ENCODE measurements at regions of chr20 and their contacts with region 1.

Region 1: DNA sequence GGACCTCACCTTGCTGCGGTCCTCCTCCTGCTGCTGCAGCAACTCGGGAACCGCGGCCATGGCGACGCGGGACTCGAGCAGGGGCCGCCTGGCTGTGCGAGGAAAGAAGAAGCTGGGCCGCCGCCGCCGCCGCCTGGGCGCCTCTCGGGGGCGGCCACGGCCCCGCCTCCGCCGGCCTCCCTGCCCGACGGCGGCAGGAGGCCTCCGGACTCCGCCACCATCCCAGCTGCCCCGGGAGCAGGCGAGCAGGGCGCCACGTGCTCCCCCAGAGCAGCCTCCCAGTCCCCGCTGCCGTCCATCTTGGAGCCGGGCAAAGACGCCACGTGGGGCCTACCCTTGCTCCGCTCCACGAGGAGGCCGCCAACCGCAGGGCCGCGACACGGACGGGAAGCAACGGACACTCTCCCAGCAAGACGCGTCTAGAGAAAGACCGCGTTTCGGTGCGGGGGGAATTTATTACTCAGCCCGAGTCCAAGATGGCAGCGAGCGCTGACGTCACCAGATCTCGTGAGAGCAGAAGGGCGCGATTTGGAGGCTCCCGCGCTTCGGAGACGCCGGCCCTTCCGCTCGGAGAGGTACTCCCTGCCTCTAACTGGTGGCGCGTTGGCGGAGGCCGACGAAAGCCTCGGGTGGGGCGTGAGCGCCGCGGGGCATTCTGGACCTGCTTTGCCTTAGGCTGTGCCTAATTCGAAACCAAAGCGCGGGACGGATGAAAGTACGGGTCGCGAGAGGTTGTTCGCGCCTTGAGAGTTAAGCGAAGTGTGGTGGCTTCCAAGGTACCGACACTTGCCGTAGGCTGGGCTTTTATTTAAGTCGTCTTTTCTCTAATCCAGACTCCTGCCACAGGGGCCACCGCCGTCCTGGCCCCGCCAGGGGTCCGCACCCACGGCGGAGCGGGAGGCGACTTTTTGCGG is at the starts of genes MGME1 and SNX5:
- DNase-seq: peak; percentile 100
- H3K4me3 ChIP-seq: peak within 1 kb of the TSS; percentile 72
- H3K4me3 Mint-ChIP-seq: peak within 1 kb of the TSS; percentile 93
- H3K27ac Mint-ChIP-seq: peak within 1 kb of the TSS; percentile 99
- H3K4me1 ChIP-seq: peaks cover 51% of the 10 kb centered on the region
- H3K4me1 Mint-ChIP-seq: peaks cover 24% of the 10 kb centered on the region
- H3K27me3 ChIP-seq: no peaks in the 10 kb centered on the region
- H3K27me3 Mint-ChIP-seq: no peaks in the 10 kb centered on the region
- CTCF ChIP-seq: no peak
- total RNA-seq, gene MGME1: 44.3 and 50.5 TPM in 2 replicates
- total RNA-seq, gene SNX5: 275 and 299 TPM in 2 replicates

Region 2: GRCh38 chr20:17873410-17874270 is 95.0 kb before region 1 on chr20:
- CTCF ChIA-PET with region 1: no interaction called
- POLR2A ChIA-PET with region 1: no interaction called
- intact Hi-C with region 1: no loop called
- DNase-seq: no peak
- H3K4me3 ChIP-seq: no peak overlapping the region
- H3K4me3 Mint-ChIP-seq: no peak overlapping the region
- H3K27ac Mint-ChIP-seq: no peak overlapping the region
- H3K4me1 ChIP-seq: peaks cover 48% of the 10 kb centered on the region
- H3K4me1 Mint-ChIP-seq: peaks cover 41% of the 10 kb centered on the region
- H3K27me3 ChIP-seq: no peaks in the 10 kb centered on the region
- H3K27me3 Mint-ChIP-seq: no peaks in the 10 kb centered on the region
- CTCF ChIP-seq: no peak

Region 3: DNA sequence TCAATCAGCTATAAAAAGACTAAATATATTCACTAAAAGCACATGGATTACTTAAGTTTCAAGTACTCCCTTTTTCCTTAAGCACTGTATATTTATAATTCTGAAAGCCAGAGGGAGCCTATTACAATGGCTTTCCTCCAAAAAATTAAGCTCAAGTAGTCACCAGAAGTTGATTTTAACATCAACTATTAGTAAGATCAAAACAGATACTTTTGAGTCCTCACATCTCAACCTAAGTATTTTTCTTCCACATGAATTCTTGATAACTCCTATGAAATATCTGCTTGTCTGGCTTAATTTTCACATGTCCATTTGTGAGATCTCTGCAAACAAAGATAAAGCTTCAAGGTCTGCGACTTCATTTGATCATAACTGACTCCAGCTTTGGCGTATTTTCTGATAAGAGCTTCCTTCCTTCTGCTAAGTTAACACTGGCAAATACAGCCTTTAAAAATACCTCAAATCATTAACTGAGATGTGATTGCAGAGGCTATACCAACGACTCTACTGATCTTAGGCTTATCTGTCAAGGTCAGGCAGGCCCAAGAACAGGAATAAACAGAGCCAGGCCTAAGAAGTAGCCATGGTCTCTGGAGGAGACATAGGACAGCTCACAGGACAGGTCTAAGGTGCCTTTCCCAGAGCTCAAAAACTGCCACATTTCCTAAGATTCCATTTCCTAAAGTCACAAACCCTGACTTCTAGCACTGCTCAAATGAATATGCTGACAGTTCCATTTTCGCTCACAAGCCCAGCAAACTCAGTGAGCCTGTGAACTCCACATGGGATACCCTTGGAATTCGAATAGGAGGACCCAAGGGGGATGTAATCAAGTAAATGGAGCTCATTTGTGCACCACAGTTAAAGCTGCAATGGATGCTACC is 10.0 kb before region 1 on chr20:
- CTCF ChIA-PET with region 1: interaction called, 21 read pairs
- POLR2A ChIA-PET with region 1: interaction called, 13 read pairs
- intact Hi-C with region 1: loop called (anchors 1 kb)
- DNase-seq: peak; percentile 60 to 67
- H3K4me3 ChIP-seq: no peak overlapping the region
- H3K4me3 Mint-ChIP-seq: peak overlapping the region; percentile 29
- H3K27ac Mint-ChIP-seq: peak overlapping the region; percentile 83
- H3K4me1 ChIP-seq: peaks cover 57% of the 10 kb centered on the region
- H3K4me1 Mint-ChIP-seq: peaks cover 60% of the 10 kb centered on the region
- H3K27me3 ChIP-seq: no peaks in the 10 kb centered on the region
- H3K27me3 Mint-ChIP-seq: no peaks in the 10 kb centered on the region
- CTCF ChIP-seq: no peak

Region 4: GRCh38 chr20:17985388-17986018 is 16.9 kb after region 1 on chr20:
- CTCF ChIA-PET with region 1: interaction called, 6 read pairs
- POLR2A ChIA-PET with region 1: interaction called, 5 read pairs
- intact Hi-C with region 1: loop called (anchors 1 kb)
- DNase-seq: peak; percentile 51 to 74
- H3K4me3 ChIP-seq: no peak overlapping the region
- H3K4me3 Mint-ChIP-seq: no peak overlapping the region
- H3K27ac Mint-ChIP-seq: no peak overlapping the region
- H3K4me1 ChIP-seq: peaks cover 15% of the 10 kb centered on the region
- H3K4me1 Mint-ChIP-seq: peaks cover 6% of the 10 kb centered on the region
- H3K27me3 ChIP-seq: no peaks in the 10 kb centered on the region
- H3K27me3 Mint-ChIP-seq: no peaks in the 10 kb centered on the region
- CTCF ChIP-seq: no peak

Region 5: GRCh38 chr20:17995967-17996819 is 27.6 kb after region 1 on chr20:
- CTCF ChIA-PET with region 1: no interaction called
- POLR2A ChIA-PET with region 1: interaction called, 3 read pairs
- intact Hi-C with region 1: loop called (anchors 1 kb)
- DNase-seq: peak in 1 of 2 experiments; percentile 59
- H3K4me3 ChIP-seq: no peak overlapping the region
- H3K4me3 Mint-ChIP-seq: no peak overlapping the region
- H3K27ac Mint-ChIP-seq: no peak overlapping the region
- H3K4me1 ChIP-seq: peaks cover 6% of the 10 kb centered on the region
- H3K4me1 Mint-ChIP-seq: peaks cover 12% of the 10 kb centered on the region
- H3K27me3 ChIP-seq: no peaks in the 10 kb centered on the region
- H3K27me3 Mint-ChIP-seq: no peaks in the 10 kb centered on the region
- CTCF ChIP-seq: peak; percentile 88 to 94

Region 6: GRCh38 chr20:18032977-18033892 is 64.6 kb after region 1 on chr20:
- CTCF ChIA-PET with region 1: no interaction called
- POLR2A ChIA-PET with region 1: interaction called, 8 read pairs
- intact Hi-C with region 1: loop called (anchors 5 kb)
- DNase-seq: peak; percentile 85 to 96
- H3K4me3 ChIP-seq: no peak overlapping the region
- H3K4me3 Mint-ChIP-seq: peak overlapping the region; percentile 61
- H3K27ac Mint-ChIP-seq: peak overlapping the region; percentile 88
- H3K4me1 ChIP-seq: peaks cover 58% of the 10 kb centered on the region
- H3K4me1 Mint-ChIP-seq: peaks cover 38% of the 10 kb centered on the region
- H3K27me3 ChIP-seq: no peaks in the 10 kb centered on the region
- H3K27me3 Mint-ChIP-seq: no peaks in the 10 kb centered on the region
- CTCF ChIP-seq: peak; percentile 43 to 45

Region 7: DNA sequence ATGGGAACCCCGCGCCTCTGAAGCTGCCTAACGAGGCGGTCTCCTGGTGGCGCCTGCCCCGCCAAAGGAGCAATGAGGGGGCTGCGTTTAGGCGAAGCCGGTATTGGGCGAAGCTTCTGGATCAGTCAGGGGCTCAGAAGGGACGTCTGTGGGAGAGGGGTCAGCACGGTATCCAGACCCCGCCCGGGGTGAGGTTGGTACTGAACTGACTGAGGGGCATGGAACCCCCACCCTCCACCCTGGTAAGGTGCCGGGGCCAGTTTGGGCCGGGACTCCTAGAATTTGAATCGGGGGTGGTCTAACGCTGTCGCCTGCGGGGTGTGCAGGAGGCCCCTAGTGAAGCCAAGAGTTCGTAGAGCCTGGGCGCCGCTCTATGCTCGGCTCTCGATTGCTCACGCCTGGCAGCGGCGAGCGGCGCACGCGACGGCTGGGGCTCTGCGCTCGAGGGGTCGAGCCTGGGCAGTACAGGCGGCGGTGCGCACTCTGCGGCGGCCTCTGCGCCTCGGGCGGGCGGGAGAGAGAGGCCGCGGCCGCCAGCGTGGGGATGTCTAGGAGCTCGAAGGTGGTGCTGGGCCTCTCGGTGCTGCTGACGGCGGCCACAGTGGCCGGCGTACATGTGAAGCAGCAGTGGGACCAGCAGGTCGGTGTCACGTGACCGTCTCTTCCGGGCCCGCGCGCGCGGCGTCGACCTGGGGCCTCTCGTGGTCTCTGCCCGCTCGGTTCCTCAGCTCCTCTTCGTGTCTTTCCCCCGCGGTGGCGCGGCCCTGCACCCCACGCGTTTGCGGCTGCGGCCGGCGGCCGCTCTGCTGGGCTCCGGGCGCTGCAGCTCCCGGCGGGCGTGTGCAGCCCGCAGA is 169.0 kb after region 1 on chr20 and contains the starts of genes KAT14 and PET117:
- CTCF ChIA-PET with region 1: no interaction called
- POLR2A ChIA-PET with region 1: no interaction called
- intact Hi-C with region 1: loop called (anchors 5 kb)
- DNase-seq: peak; percentile 95 to 98
- H3K4me3 ChIP-seq: peak within 1 kb of the TSS; percentile 80
- H3K4me3 Mint-ChIP-seq: peak within 1 kb of the TSS; percentile 74
- H3K27ac Mint-ChIP-seq: peak within 1 kb of the TSS; percentile 90
- H3K4me1 ChIP-seq: peaks cover 25% of the 10 kb centered on the region
- H3K4me1 Mint-ChIP-seq: peaks cover 32% of the 10 kb centered on the region
- H3K27me3 ChIP-seq: no peaks in the 10 kb centered on the region
- H3K27me3 Mint-ChIP-seq: no peaks in the 10 kb centered on the region
- CTCF ChIP-seq: no peak
- total RNA-seq, gene KAT14: 77.1 and 83.2 TPM in 2 replicates
- total RNA-seq, gene PET117: 30.2 and 30.9 TPM in 2 replicates